ENCODE measurements at regions of chr22 and their contacts with region 1.

Region 1: DNA sequence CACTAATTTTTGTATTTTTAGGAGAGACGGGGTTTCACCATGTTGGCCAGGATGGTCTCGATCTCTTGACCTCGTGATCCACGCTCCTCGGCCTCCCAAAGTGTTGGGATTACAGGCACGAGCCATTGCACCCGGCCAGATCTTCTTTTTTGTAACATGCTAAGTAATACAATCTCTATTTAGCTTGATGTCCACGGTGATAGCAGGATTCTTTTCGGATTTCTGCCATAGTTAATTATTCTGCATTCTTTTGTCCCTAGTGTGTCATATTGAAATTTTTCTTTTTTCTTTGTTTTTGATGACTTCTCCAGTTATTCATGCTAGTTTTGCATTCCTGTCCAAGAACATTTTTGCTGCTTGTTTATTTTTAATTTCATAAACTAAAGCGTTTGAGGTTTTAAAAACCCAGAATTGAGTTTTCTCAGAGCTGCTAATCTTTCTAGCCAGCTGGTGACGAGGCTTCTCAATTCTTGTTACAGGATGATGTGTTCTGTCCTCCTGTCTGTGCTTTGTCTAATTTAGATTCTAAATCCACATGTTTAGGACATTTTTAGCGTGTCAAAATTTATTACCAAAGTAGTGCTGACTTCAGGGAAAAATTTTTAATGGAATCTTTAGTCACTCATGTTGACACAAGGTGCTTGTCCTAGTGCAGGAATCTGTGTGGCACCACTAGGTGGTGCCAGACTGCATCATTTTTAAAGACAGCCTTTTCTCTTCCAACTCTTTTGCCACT is 21.8 kb downstream of the NF2 start:
- DNase-seq: peak; percentile 55
- ATAC-seq: no peak
- H3K4me3 Mint-ChIP-seq: no peak overlapping the region
- H3K27ac Mint-ChIP-seq: peak overlapping the region; percentile 14
- H3K4me1 Mint-ChIP-seq: peaks cover 57% of the 10 kb centered on the region
- H3K27me3 Mint-ChIP-seq: no peaks in the 10 kb centered on the region

Region 2: GRCh38 chr22:29491012-29491411 is 134.2 kb before region 1 on chr22:
- CTCF ChIA-PET with region 1: no interaction called
- POLR2A ChIA-PET with region 1: no interaction called
- DNase-seq: no peak
- ATAC-seq: no peak
- H3K4me3 Mint-ChIP-seq: no peak overlapping the region
- H3K27ac Mint-ChIP-seq: no peak overlapping the region
- H3K4me1 Mint-ChIP-seq: no peaks in the 10 kb centered on the region
- H3K27me3 Mint-ChIP-seq: no peaks in the 10 kb centered on the region

Region 3: GRCh38 chr22:29524440-29525191 is 100.6 kb before region 1 on chr22:
- CTCF ChIA-PET with region 1: no interaction called
- POLR2A ChIA-PET with region 1: no interaction called
- DNase-seq: peak; percentile 47
- ATAC-seq: peak; percentile 58
- H3K4me3 Mint-ChIP-seq: no peak overlapping the region
- H3K27ac Mint-ChIP-seq: no peak overlapping the region
- H3K4me1 Mint-ChIP-seq: no peaks in the 10 kb centered on the region
- H3K27me3 Mint-ChIP-seq: no peaks in the 10 kb centered on the region

Region 4: GRCh38 chr22:29587938-29588699 is 37.1 kb before region 1 on chr22:
- CTCF ChIA-PET with region 1: interaction called, 30 read pairs
- POLR2A ChIA-PET with region 1: no interaction called
- DNase-seq: no peak
- ATAC-seq: no peak
- H3K4me3 Mint-ChIP-seq: no peak overlapping the region
- H3K27ac Mint-ChIP-seq: no peak overlapping the region
- H3K4me1 Mint-ChIP-seq: peaks cover 12% of the 10 kb centered on the region
- H3K27me3 Mint-ChIP-seq: no peaks in the 10 kb centered on the region

Region 5: GRCh38 chr22:29610780-29611179 is 14.5 kb before region 1 on chr22:
- CTCF ChIA-PET with region 1: interaction called, 49 read pairs
- POLR2A ChIA-PET with region 1: no interaction called
- DNase-seq: no peak
- ATAC-seq: no peak
- H3K4me3 Mint-ChIP-seq: no peak overlapping the region
- H3K27ac Mint-ChIP-seq: no peak overlapping the region
- H3K4me1 Mint-ChIP-seq: peaks cover 13% of the 10 kb centered on the region
- H3K27me3 Mint-ChIP-seq: no peaks in the 10 kb centered on the region

Region 6: DNA sequence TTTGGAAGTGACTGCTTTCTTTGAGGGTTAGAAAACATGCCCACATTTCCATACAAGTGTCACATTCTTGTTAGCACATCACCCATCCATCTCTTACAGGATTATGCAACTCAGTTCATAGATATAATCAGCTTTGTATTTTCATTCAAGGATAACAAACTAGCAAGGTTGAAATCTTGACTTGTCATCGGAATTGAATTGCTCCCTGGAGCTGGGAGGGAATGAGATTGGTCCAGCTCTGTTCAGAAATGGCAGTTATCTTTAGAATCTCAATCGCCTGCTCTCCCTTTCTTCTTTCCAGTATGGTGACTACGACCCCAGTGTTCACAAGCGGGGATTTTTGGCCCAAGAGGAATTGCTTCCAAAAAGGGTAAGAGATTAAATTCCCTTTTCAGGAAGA is 29.1 kb after region 1 on chr22:
- CTCF ChIA-PET with region 1: interaction called, 20 read pairs
- POLR2A ChIA-PET with region 1: interaction called, 3 read pairs
- DNase-seq: no peak
- ATAC-seq: no peak
- H3K4me3 Mint-ChIP-seq: no peak overlapping the region
- H3K27ac Mint-ChIP-seq: no peak overlapping the region
- H3K4me1 Mint-ChIP-seq: no peaks in the 10 kb centered on the region
- H3K27me3 Mint-ChIP-seq: no peaks in the 10 kb centered on the region

Region 7: GRCh38 chr22:29683536-29683935 is 58.3 kb after region 1 on chr22:
- CTCF ChIA-PET with region 1: no interaction called
- POLR2A ChIA-PET with region 1: no interaction called
- DNase-seq: no peak
- ATAC-seq: no peak
- H3K4me3 Mint-ChIP-seq: no peak overlapping the region
- H3K27ac Mint-ChIP-seq: no peak overlapping the region
- H3K4me1 Mint-ChIP-seq: no peaks in the 10 kb centered on the region
- H3K27me3 Mint-ChIP-seq: no peaks in the 10 kb centered on the region

Region 8: GRCh38 chr22:30089655-30089974 is 464.4 kb after region 1 on chr22:
- CTCF ChIA-PET with region 1: interaction called, 11 read pairs
- POLR2A ChIA-PET with region 1: no interaction called
- DNase-seq: no peak
- ATAC-seq: no peak
- H3K4me3 Mint-ChIP-seq: no peak overlapping the region
- H3K27ac Mint-ChIP-seq: no peak overlapping the region
- H3K4me1 Mint-ChIP-seq: peaks cover 22% of the 10 kb centered on the region
- H3K27me3 Mint-ChIP-seq: peaks cover 2% of the 10 kb centered on the region